OCI-LY7 (cell line): ENCODE measurements at regions of chr19 and their contacts with region 1.

Region 1: GRCh38 chr19:41821003-41821735 is 23.3 kb downstream of the LYPD4 start:
- DNase-seq: peak; percentile 84
- H3K4me3 ChIP-seq: no peak overlapping the region
- H3K27ac ChIP-seq: no peak overlapping the region
- H3K4me1 ChIP-seq: peaks cover 5% of the 10 kb centered on the region
- CTCF ChIP-seq: peak; percentile 96

Region 2: DNA sequence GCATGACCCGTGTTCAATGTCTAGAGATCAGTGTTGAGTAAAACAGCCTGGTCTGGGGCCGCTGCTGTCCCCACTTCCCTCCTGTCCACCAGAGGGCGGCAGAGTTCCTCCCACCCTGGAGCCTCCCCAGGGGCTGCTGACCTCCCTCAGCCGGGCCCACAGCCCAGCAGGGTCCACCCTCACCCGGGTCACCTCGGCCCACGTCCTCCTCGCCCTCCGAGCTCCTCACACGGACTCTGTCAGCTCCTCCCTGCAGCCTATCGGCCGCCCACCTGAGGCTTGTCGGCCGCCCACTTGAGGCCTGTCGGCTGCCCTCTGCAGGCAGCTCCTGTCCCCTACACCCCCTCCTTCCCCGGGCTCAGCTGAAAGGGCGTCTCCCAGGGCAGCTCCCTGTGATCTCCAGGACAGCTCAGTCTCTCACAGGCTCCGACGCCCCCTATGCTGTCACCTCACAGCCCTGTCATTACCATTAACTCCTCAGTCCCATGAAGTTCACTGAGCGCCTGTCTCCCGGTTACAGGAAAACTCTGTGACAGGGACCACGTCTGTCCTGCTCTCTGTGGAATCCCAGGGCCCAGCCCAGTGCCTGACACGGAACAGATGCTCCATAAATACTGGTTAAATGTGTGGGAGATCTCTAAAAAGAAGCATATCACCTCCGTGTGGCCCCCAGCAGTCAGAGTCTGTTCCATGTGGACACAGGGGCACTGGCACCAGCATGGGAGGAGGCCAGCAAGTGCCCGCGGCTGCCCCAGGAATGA is 114.2 kb before region 1 on chr19:
- CTCF ChIA-PET with region 1: no interaction called
- POLR2A ChIA-PET with region 1: no interaction called
- intact Hi-C with region 1: loop called (anchors 1 kb)
- DNase-seq: peak; percentile 76
- H3K4me3 ChIP-seq: peak overlapping the region; percentile 45
- H3K27ac ChIP-seq: no peak overlapping the region
- H3K4me1 ChIP-seq: no peaks in the 10 kb centered on the region
- CTCF ChIP-seq: peak; percentile 100

Region 3: GRCh38 chr19:41753936-41754529 is 67.1 kb before region 1 on chr19:
- CTCF ChIA-PET with region 1: no interaction called
- POLR2A ChIA-PET with region 1: no interaction called
- intact Hi-C with region 1: loop called (anchors 1 kb)
- DNase-seq: peak; percentile 70
- H3K4me3 ChIP-seq: no peak overlapping the region
- H3K27ac ChIP-seq: no peak overlapping the region
- H3K4me1 ChIP-seq: peaks cover 10% of the 10 kb centered on the region
- CTCF ChIP-seq: peak; percentile 89

Region 4: GRCh38 chr19:41785653-41786052 is 35.5 kb before region 1 on chr19:
- CTCF ChIA-PET with region 1: interaction called, 4 read pairs
- POLR2A ChIA-PET with region 1: no interaction called
- intact Hi-C with region 1: loop called (anchors 2 kb)
- DNase-seq: peak; percentile 88
- H3K4me3 ChIP-seq: peak overlapping the region; percentile 15
- H3K27ac ChIP-seq: no peak overlapping the region
- H3K4me1 ChIP-seq: peaks cover 22% of the 10 kb centered on the region
- CTCF ChIP-seq: peak; percentile 94

Region 5: GRCh38 chr19:41795031-41795461 is 26.1 kb before region 1 on chr19:
- CTCF ChIA-PET with region 1: interaction called, 6 read pairs
- POLR2A ChIA-PET with region 1: no interaction called
- intact Hi-C with region 1: loop called (anchors 1 kb)
- DNase-seq: peak; percentile 73
- H3K4me3 ChIP-seq: no peak overlapping the region
- H3K27ac ChIP-seq: no peak overlapping the region
- H3K4me1 ChIP-seq: peaks cover 16% of the 10 kb centered on the region
- CTCF ChIP-seq: peak; percentile 94